ENCODE measurements at regions of chr11 and their contacts with region 1.

Region 1: DNA sequence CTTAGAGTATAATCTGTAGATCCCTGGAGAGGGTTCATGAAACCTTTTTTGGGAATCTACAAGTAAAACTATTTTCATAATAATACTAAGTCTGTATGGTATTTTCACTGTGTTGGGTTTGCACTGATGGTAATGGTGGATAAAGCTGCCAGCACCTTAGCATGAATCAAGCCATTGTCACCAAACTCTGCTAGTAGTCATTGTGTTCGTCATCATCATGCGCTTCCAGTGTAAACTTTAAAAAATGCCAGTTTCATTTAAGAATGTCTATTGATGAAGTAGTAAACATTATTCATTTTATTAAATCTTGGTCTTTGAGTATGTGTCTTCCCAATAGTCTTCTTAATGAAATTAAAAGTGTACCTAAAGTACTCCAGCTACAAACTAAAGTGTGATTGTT is 15.0 kb downstream of the ALKBH3 start:
- DNase-seq: no peak
- H3K27ac ChIP-seq: no peak overlapping the region
- CTCF ChIP-seq: no peak

Region 2: DNA sequence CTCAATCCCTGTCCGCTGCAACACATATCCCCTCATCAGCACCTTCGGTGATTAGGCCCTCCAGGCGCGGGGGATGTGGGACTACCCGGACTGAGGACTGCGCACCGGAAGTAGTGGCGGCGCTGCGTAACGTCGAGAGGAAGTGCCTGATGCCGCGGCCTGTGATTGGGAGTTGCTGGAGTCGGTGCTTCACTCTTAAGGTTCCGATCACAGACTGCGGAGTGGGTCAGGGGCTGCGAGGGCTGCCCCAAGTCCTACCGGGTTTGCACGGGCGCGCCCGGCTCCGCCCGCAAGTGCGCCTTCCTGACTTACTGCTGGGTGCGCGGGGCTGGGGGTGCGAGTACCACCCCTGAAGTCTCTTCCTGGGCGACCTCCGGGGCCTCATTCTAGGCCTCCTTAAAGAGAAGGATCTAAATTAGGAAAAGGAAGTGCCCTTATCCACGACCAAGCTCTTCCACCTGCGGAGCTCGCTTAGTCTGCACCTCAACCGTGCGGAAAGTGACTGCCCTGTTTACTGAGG is 14.9 kb before region 1 on chr11 and contains the start of gene ALKBH3:
- CTCF ChIA-PET with region 1: no interaction called
- POLR2A ChIA-PET with region 1: no interaction called
- DNase-seq: peak; percentile 85
- H3K27ac ChIP-seq: peak within 1 kb of the TSS; percentile 59
- CTCF ChIP-seq: no peak

Region 3: GRCh38 chr11:43944761-43945311 is 49.2 kb after region 1 on chr11:
- CTCF ChIA-PET with region 1: interaction called, 41 read pairs
- POLR2A ChIA-PET with region 1: no interaction called
- DNase-seq: peak; percentile 69
- H3K27ac ChIP-seq: no peak overlapping the region
- CTCF ChIP-seq: peak; percentile 74

Region 4: DNA sequence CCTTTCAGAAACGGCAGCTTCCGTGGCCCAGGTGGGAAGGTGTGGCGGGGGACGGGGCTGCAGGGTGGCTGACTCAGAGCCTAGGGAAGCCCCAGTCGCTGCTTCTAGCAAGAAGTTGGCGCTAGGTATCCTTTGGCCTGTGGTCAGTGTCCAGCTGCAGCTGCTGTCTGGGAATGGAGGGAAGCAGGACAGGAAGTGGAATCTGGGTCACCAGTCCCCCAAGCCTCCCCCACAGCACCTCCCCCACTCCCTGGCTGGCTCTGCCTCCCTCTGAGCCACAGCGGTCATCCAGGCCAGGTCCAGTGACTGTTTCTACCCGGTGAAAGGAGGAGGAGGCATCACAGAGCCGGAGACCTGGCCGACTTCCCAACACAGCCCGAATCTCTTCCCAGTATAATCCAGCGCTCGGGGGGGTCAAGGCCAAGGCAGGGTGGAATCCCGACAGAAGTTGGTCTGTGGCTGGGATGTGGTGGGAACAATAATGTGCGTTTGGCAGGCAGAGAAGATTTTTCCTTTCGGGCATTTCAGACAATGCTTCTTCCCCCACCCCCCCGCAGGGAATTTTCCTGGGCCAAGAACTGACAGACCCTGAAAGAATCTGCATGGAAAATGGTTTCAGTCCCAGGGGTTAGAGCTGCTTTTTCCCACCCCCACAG is 91.9 kb after region 1 on chr11:
- CTCF ChIA-PET with region 1: no interaction called
- POLR2A ChIA-PET with region 1: no interaction called
- DNase-seq: no peak
- H3K27ac ChIP-seq: no peak overlapping the region
- CTCF ChIP-seq: no peak

Measured in RWPE1 (cell line).